ENCODE measurements at regions of chr4 and their contacts with region 1.

Region 1: GRCh38 chr4:15956179-15956850 is 6.7 kb downstream of the FGFBP2 start:
- DNase-seq: peak; percentile 81 to 92 (median 82)
- ATAC-seq: peak; percentile 90 to 91
- H3K4me3 ChIP-seq: no peak overlapping the region
- H3K27ac ChIP-seq: no peak overlapping the region
- H3K4me1 ChIP-seq: no peaks in the 10 kb centered on the region
- H3K27me3 ChIP-seq: no peaks in the 10 kb centered on the region

Region 2: GRCh38 chr4:15479089-15479912 is 477.0 kb before region 1 on chr4:
- intact Hi-C with region 1: loop called in 2 of 4 experiments (anchors 10 kb)
- DNase-seq: peak; percentile 49 to 71 (median 70)
- ATAC-seq: peak; percentile 84 to 86
- H3K4me3 ChIP-seq: peak overlapping the region; percentile 26
- H3K27ac ChIP-seq: peak overlapping the region; percentile 74
- H3K4me1 ChIP-seq: no peaks in the 10 kb centered on the region
- H3K27me3 ChIP-seq: no peaks in the 10 kb centered on the region

Region 3: DNA sequence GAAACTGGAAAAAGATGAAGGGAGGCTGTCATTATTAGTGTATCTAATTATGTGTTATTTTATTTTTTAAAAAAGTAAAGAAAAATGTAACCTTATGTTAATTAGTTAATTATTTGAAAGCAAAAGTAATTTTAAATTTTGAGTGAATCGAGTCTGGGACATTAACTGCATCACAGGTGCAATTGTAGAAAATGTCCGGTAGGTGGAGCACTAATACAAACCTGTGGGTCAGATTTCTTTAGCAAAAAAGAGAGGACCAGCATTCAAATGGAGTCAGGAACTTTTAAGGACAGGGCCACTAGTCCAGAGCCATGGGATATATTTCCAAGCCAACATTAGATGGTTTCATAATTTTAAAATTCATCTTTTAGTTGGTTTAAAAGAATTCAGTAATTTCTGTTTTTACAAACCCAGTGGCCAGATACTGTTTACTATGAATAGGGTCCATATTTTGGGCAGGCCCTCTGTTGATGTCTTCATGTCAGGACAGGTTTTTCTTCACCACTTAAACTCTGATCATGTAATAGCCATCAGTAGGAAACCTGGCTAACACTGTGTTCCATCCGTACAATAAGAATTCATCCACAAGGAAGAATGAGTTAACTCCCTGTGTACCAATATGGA is 226.3 kb before region 1 on chr4:
- intact Hi-C with region 1: loop called in 1 of 4 experiments (anchors 10 kb)
- DNase-seq: no peak
- ATAC-seq: peak; percentile 57
- H3K4me3 ChIP-seq: no peak overlapping the region
- H3K27ac ChIP-seq: no peak overlapping the region
- H3K4me1 ChIP-seq: no peaks in the 10 kb centered on the region
- H3K27me3 ChIP-seq: no peaks in the 10 kb centered on the region

Region 4: DNA sequence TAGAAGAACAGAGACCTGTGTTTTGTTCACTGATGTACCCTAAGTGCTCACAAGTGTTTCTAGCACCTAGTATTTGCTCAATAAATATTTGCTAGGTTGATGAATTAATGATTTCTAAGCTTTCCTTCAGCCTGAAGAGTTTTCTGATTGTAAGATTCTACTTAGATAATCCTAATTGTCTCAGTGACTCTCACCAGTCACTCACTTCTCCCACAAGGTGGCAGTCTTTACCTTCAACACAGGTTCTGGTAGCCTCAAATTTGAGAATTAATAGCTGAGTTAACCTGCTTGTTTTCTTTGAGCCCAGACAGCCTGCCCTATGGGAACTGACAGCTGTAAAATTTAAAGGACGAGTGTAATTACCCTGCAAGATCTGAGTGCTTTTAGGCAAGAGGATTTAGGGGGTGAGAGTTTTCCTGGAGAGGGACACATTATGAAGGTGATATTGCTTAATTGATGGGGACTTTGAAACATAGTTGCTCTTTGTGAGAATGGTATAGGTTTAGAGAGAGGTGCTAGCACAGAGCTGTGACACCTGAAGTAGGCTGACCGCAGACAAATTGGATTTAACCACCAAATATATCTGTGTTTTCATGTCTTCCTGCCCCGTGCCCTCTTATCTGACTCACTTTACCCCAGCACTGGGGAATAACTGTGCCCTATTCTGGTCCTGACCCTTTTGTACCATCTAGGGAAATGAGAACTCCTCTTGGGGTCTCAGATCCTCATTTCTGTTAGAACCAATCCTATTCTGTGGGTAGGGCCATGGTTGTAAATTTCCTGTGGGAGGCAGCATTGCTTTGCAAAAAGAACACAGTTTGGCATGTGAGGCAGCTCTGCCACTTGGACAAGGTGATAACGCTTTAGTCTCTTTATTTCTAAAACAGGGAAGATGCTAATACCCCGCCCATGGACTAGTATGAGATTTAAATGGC is 150.5 kb before region 1 on chr4:
- intact Hi-C with region 1: loop called in 2 of 4 experiments (anchors 2 to 5 kb)
- DNase-seq: no peak
- ATAC-seq: peak; percentile 79
- H3K4me3 ChIP-seq: no peak overlapping the region
- H3K27ac ChIP-seq: no peak overlapping the region
- H3K4me1 ChIP-seq: no peaks in the 10 kb centered on the region
- H3K27me3 ChIP-seq: no peaks in the 10 kb centered on the region

Region 5: DNA sequence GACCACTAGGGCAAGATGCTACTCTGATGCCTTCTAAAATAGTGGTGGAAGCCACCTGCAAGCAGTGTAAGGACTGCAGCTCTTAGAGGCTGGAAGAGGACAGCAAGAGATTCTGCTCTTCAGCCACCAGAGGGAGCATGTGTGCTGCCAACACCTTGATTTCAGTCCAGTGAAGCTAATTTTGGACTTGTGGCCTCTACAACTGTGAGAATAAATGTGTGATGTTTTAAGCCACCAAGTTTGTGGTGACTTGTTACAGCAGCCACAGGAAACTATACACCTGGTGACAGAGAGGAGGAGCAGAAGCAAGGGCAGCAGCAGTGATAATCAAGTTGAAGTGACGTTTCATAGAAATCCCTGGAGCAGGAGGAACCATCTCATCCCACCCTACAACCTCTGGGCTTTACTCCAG is 73.6 kb before region 1 on chr4:
- intact Hi-C with region 1: loop called (anchors 2 to 10 kb)
- DNase-seq: peak in 2 of 3 donors; percentile 40 to 55
- ATAC-seq: peak; percentile 86 to 87
- H3K4me3 ChIP-seq: no peak overlapping the region
- H3K27ac ChIP-seq: no peak overlapping the region
- H3K4me1 ChIP-seq: no peaks in the 10 kb centered on the region
- H3K27me3 ChIP-seq: no peaks in the 10 kb centered on the region

Region 6: GRCh38 chr4:15894921-15895916 is 61.1 kb before region 1 on chr4:
- intact Hi-C with region 1: no loop called
- DNase-seq: no peak
- ATAC-seq: no peak
- H3K4me3 ChIP-seq: no peak overlapping the region
- H3K27ac ChIP-seq: no peak overlapping the region
- H3K4me1 ChIP-seq: no peaks in the 10 kb centered on the region
- H3K27me3 ChIP-seq: no peaks in the 10 kb centered on the region

Region 7: GRCh38 chr4:16155513-16156169 is 199.3 kb after region 1 on chr4:
- intact Hi-C with region 1: no loop called
- DNase-seq: peak in 1 of 3 donors; percentile 50
- ATAC-seq: no peak
- H3K4me3 ChIP-seq: no peak overlapping the region
- H3K27ac ChIP-seq: no peak overlapping the region
- H3K4me1 ChIP-seq: peaks cover 6% of the 10 kb centered on the region
- H3K27me3 ChIP-seq: no peaks in the 10 kb centered on the region

Measured in right cardiac atrium (tissue), 5 donors.